Activated CD4-positive, alpha-beta memory T cell treated with anti-CD3 and anti-CD28 coated beads for 36 hours (primary cell): ENCODE measurements at regions of chr11 and their contacts with region 1.

Region 1: DNA sequence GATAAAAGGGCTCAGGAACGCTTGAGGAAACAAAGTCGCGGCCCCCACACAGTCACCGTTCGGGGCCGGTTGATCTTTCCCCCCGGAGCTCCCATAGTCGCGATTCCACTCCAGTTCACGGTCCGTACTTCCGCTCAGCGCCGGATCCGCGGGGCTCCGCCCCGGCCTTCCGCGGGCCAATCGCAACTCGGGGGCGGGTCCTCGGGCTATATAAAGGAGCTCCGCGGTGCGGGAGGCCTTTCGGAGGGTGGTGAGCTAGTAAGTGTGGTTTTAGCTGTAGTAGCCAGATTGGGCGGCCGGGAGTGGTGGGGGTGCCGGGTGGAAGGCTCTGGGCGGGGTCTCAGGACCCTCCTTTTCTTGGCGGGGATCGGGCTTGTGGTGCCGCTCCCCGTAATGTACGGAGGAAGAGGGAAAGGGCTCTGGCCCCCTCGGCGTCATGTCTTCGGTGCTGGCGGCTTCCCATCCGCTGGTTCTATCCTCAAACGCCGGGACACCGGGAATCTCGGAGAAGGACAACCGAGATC is at the starts of genes C11orf98 and CSKMT:
- DNase-seq: peak; percentile 97
- H3K4me3 Mint-ChIP-seq: peak within 1 kb of the TSS; percentile 98
- H3K27ac Mint-ChIP-seq: peak within 1 kb of the TSS; percentile 97
- H3K4me1 Mint-ChIP-seq: peaks cover 40% of the 10 kb centered on the region
- H3K27me3 Mint-ChIP-seq: no peaks in the 10 kb centered on the region
- total RNA-seq, gene C11orf98: 107 to 110 TPM
- total RNA-seq, gene CSKMT: 27.7 to 33.9 TPM

Region 2: DNA sequence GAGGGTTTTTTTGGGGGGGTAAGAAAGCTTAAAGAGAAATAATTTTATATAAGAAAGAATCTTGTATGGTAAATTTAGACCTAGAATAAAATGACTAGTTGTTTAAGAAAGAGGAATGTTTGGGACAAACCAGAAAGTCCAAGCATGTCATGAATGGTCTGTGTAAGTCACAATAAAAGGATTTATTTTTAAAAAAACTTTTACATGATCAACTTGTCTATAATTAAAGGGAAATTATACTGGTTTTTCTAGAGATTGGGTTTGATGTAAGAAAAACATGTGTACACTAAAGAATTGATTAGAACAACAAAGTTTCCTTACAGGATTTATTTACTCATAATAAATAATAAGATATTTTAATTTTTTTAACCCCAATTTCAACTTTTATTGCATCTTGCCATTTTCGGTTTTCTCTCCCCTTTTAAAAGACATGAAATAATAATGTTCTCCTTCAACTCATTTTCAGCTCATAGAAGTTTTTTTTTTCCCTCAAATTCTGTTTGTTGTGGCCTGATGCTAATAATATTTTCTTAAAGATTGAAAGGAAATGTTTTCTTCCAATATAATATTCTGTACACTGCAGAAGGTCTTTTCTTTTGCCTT is 576.7 kb before region 1 on chr11:
- CTCF ChIA-PET with region 1: no interaction called
- POLR2A ChIA-PET with region 1: no interaction called
- intact Hi-C with region 1: no loop called
- DNase-seq: no peak
- H3K4me3 Mint-ChIP-seq: no peak overlapping the region
- H3K27ac Mint-ChIP-seq: no peak overlapping the region
- H3K4me1 Mint-ChIP-seq: no peaks in the 10 kb centered on the region
- H3K27me3 Mint-ChIP-seq: peaks cover 3% of the 10 kb centered on the region

Region 3: GRCh38 chr11:62573592-62574362 is 91.4 kb before region 1 on chr11 and contains the start of gene EEF1G:
- CTCF ChIA-PET with region 1: no interaction called
- POLR2A ChIA-PET with region 1: interaction called, 16 read pairs
- intact Hi-C with region 1: no loop called
- DNase-seq: peak; percentile 99
- H3K4me3 Mint-ChIP-seq: peak within 1 kb of the TSS; percentile 93
- H3K27ac Mint-ChIP-seq: peak within 1 kb of the TSS; percentile 96
- H3K4me1 Mint-ChIP-seq: peaks cover 50% of the 10 kb centered on the region
- H3K27me3 Mint-ChIP-seq: no peaks in the 10 kb centered on the region
- total RNA-seq, gene EEF1G: 1,956 to 1,989 TPM

Region 4: DNA sequence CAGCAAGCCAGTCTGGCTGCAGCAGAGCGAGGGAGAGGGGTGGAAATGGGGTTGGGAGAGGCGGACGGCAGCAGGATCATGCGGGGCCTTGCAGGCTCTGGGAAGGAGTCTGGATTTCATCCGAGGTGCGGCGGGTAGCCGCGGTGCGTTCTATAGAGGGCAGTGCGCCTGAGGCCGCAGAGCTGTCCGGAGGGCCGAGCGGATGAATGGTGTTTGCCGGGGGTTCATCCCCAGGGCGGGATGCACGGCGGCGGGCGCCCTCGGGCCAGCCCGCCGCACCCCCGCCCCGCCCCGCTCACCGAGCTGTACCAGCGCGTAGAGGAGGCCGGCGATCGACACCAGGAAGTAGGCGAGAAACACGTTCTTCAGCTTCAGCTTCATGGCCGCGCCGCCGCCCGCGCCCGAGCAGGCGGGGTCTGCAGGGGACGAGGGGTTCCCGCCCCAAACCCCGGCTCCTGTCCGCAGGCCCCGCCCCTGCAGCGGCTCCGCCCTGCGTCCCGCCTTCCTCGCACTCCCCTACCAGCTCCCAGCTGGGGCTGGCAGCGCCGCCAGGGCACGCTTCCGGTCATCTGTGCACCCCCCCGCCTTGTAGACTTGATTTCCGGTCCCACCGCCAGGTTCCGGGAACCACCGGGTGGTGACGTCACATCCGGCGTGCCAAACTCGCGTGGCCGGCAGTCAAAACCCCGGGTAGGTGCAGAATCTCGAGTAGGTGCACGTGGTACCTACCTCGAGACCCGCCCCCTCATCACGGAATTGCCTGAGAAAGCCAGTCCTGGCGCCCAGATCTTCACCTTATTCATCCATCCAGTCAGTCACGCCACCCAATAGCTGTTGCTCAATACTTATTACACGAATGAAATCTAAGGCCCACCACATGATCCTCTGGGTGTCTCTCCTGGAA is 43.3 kb before region 1 on chr11 and contains the start of gene B3GAT3:
- CTCF ChIA-PET with region 1: interaction called, 3 read pairs
- POLR2A ChIA-PET with region 1: interaction called, 27 read pairs
- intact Hi-C with region 1: loop called (anchors 2 kb)
- DNase-seq: peak; percentile 98
- H3K4me3 Mint-ChIP-seq: peak within 1 kb of the TSS; percentile 97
- H3K27ac Mint-ChIP-seq: peak within 1 kb of the TSS; percentile 96
- H3K4me1 Mint-ChIP-seq: peaks cover 22% of the 10 kb centered on the region
- H3K27me3 Mint-ChIP-seq: no peaks in the 10 kb centered on the region
- total RNA-seq, gene B3GAT3: 67.0 to 70.4 TPM

Region 5: GRCh38 chr11:62678770-62679696 is 13.9 kb after region 1 on chr11 and contains the start of gene UBXN1:
- CTCF ChIA-PET with region 1: interaction called, 15 read pairs
- POLR2A ChIA-PET with region 1: interaction called, 24 read pairs
- intact Hi-C with region 1: no loop called
- DNase-seq: peak; percentile 94
- H3K4me3 Mint-ChIP-seq: peak within 1 kb of the TSS; percentile 86
- H3K27ac Mint-ChIP-seq: peak within 1 kb of the TSS; percentile 90
- H3K4me1 Mint-ChIP-seq: peaks cover 35% of the 10 kb centered on the region
- H3K27me3 Mint-ChIP-seq: no peaks in the 10 kb centered on the region
- total RNA-seq, gene UBXN1: 110 to 116 TPM

Region 6: GRCh38 chr11:62831520-62832335 is 166.6 kb after region 1 on chr11 and contains the start of gene STX5:
- CTCF ChIA-PET with region 1: no interaction called
- POLR2A ChIA-PET with region 1: interaction called, 3 read pairs
- intact Hi-C with region 1: loop called (anchors 2 kb)
- DNase-seq: peak; percentile 100
- H3K4me3 Mint-ChIP-seq: peak within 1 kb of the TSS; percentile 84
- H3K27ac Mint-ChIP-seq: peak within 1 kb of the TSS; percentile 93
- H3K4me1 Mint-ChIP-seq: peaks cover 42% of the 10 kb centered on the region
- H3K27me3 Mint-ChIP-seq: no peaks in the 10 kb centered on the region
- total RNA-seq, gene STX5: 24.6 to 29.2 TPM